B cell (primary cell): ENCODE measurements at regions of chr19 and their contacts with region 1.

Region 1: GRCh38 chr19:45798995-45799517 is 6.4 kb upstream of the DMWD start:
- DNase-seq: peak; percentile 83
- ATAC-seq: peak; percentile 90
- H3K4me3 ChIP-seq: no peak overlapping the region
- H3K4me3 Mint-ChIP-seq: no peak overlapping the region
- H3K27ac ChIP-seq: no peak overlapping the region
- H3K27ac Mint-ChIP-seq: no peak overlapping the region
- H3K4me1 ChIP-seq: peaks cover 3 to 6% of the 10 kb centered on the region in 2 donors
- H3K4me1 Mint-ChIP-seq: peaks cover 9% of the 10 kb centered on the region
- H3K27me3 ChIP-seq: peaks cover 0 to 12% (median 0%) of the 10 kb centered on the region in 4 experiments
- H3K27me3 Mint-ChIP-seq: peaks cover 14% of the 10 kb centered on the region
- CTCF ChIP-seq: peak; percentile 95

Region 2: GRCh38 chr19:45657520-45658167 is 141.4 kb before region 1 on chr19:
- CTCF ChIA-PET with region 1: no interaction called
- POLR2A ChIA-PET with region 1: interaction called, 13 read pairs
- intact Hi-C with region 1: no loop called
- DNase-seq: no peak
- ATAC-seq: no peak
- H3K4me3 ChIP-seq: no peak overlapping the region
- H3K4me3 Mint-ChIP-seq: no peak overlapping the region
- H3K27ac ChIP-seq: no peak overlapping the region
- H3K27ac Mint-ChIP-seq: no peak overlapping the region
- H3K4me1 ChIP-seq: no peaks in the 10 kb centered on the region
- H3K4me1 Mint-ChIP-seq: no peaks in the 10 kb centered on the region
- H3K27me3 ChIP-seq: peaks cover 0 to 10% (median 4%) of the 10 kb centered on the region in 4 experiments
- H3K27me3 Mint-ChIP-seq: peaks cover 17% of the 10 kb centered on the region
- CTCF ChIP-seq: no peak

Region 3: GRCh38 chr19:45779231-45780145 is 19.6 kb before region 1 on chr19:
- CTCF ChIA-PET with region 1: interaction called, 302 read pairs
- POLR2A ChIA-PET with region 1: no interaction called
- intact Hi-C with region 1: no loop called
- DNase-seq: peak; percentile 90
- ATAC-seq: peak; percentile 96
- H3K4me3 ChIP-seq: peak overlapping the region in 4 of 5 experiments; percentile 13 to 61 (median 42)
- H3K4me3 Mint-ChIP-seq: peak overlapping the region; percentile 87
- H3K27ac ChIP-seq: no peak overlapping the region
- H3K27ac Mint-ChIP-seq: peak overlapping the region; percentile 46
- H3K4me1 ChIP-seq: peaks cover 17 to 22% of the 10 kb centered on the region in 2 donors
- H3K4me1 Mint-ChIP-seq: peaks cover 19% of the 10 kb centered on the region
- H3K27me3 ChIP-seq: peaks cover 0 to 23% (median 2%) of the 10 kb centered on the region in 4 experiments
- H3K27me3 Mint-ChIP-seq: peaks cover 10% of the 10 kb centered on the region
- CTCF ChIP-seq: peak; percentile 68

Region 4: DNA sequence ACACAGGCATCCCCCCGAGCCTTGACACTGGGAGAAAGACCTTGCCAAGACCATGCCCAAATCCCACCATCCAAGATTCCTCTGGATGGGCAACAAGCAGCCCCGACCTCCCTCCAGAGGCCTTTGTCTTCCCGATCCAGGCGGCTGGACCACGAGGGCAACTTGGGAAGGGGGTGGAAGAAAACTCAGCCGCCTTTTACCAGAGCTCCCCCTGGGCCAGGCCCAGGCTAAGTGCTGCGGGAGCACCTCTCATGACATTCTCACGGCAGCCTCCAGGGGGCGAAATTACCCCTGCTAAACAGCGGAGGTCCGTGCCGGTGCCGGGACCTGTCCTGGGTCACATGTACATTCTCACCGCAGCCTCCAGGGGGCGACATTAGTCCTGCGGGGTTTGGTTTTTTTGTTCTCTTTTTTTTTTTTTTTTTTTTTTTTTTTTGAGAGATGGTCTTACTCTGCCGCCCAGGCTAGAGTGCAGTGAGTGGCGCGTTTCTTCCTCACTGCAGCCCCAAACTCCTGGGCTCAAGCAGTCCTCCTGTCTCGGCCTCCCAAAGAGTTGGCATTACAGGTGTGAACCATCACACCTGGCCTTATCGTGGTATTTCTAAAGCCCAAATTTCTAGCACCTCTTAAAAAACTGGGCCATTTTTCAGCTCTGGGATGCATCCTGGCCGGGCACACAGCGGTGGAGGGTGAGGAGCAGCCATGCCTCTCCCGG is 18.1 kb after region 1 on chr19:
- CTCF ChIA-PET with region 1: interaction called, 10 read pairs
- POLR2A ChIA-PET with region 1: no interaction called
- intact Hi-C with region 1: no loop called
- DNase-seq: peak; percentile 96
- ATAC-seq: peak; percentile 100
- H3K4me3 ChIP-seq: no peak overlapping the region
- H3K4me3 Mint-ChIP-seq: peak overlapping the region; percentile 54
- H3K27ac ChIP-seq: no peak overlapping the region
- H3K27ac Mint-ChIP-seq: peak overlapping the region; percentile 75
- H3K4me1 ChIP-seq: peaks cover 19 to 23% of the 10 kb centered on the region in 2 donors
- H3K4me1 Mint-ChIP-seq: peaks cover 11% of the 10 kb centered on the region
- H3K27me3 ChIP-seq: peaks cover 0 to 6% (median 2%) of the 10 kb centered on the region in 4 experiments
- H3K27me3 Mint-ChIP-seq: peaks cover 3% of the 10 kb centered on the region
- CTCF ChIP-seq: peak; percentile 97

Region 5: GRCh38 chr19:45882652-45883585 is 83.9 kb after region 1 on chr19:
- CTCF ChIA-PET with region 1: no interaction called
- POLR2A ChIA-PET with region 1: no interaction called
- intact Hi-C with region 1: no loop called
- DNase-seq: peak; percentile 89
- ATAC-seq: peak; percentile 37
- H3K4me3 ChIP-seq: peak overlapping the region in 4 of 5 experiments; percentile 8 to 50 (median 16)
- H3K4me3 Mint-ChIP-seq: peak overlapping the region; percentile 82
- H3K27ac ChIP-seq: no peak overlapping the region
- H3K27ac Mint-ChIP-seq: peak overlapping the region; percentile 62
- H3K4me1 ChIP-seq: peaks cover 24 to 39% of the 10 kb centered on the region in 2 donors
- H3K4me1 Mint-ChIP-seq: peaks cover 29% of the 10 kb centered on the region
- H3K27me3 ChIP-seq: peaks cover 0 to 10% (median 3%) of the 10 kb centered on the region in 4 experiments
- H3K27me3 Mint-ChIP-seq: peaks cover 14% of the 10 kb centered on the region
- CTCF ChIP-seq: peak; percentile 99